Activated T-helper 1 cell treated with anti-CD3 and anti-CD28 coated beads, Interleukin-12 subunit alpha, Interleukin-12 subunit beta, Interleukin-2, Interleukin-4 antibody, amounts not matched to agents 30 ng/mL and 10 ng/mL and 1 ng/mL, durations not matched to agents 14 hours and 24 hours and 36 hours (primary cell): ENCODE measurements at regions of chr1 and their contacts with region 1.

Region 1: DNA sequence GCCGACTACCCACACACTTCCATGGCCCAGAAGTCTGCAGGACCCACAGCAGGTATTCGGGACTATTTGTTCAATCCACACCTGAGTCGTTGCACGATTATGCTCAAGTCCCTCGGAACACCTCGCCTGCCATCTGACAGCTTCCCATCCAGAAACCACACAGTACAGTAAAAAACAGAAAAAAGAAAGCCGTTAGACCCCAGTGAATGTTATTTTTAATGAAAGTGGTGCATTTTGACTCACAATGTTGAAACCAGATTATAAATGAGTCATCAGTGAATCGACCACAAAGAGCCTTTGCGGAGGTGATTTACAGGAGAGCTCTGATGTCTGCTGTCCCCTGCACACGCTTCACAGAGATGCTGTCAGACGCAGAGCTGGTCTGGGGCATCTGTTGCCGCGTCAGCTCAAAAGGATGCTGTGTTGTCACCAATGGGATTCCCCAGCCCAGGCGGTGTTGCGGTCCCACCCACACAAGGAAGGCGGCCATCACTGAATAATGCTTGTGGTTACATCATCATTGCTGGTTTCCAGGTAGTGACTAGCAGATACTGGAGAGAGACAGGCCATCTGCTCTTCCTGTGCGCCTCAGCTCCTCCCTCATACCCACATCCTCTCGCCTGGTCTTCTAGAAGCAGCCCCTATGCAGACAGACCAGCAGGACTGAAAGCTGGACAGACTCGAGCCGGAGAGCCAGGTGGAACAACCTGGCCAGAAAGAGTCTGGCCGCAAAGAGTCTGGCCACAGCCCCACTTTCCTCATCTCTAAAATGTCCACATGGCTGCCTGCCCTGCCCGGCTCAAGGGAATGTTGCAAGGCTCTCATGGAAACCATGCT is 116.8 kb downstream of the TOMM20 start:
- DNase-seq: peak; percentile 97
- H3K4me3 Mint-ChIP-seq: peak overlapping the region; percentile 40
- H3K27ac Mint-ChIP-seq: peak overlapping the region; percentile 95
- H3K4me1 Mint-ChIP-seq: peaks cover 88% of the 10 kb centered on the region
- H3K27me3 Mint-ChIP-seq: peaks cover 5% of the 10 kb centered on the region

Region 2: DNA sequence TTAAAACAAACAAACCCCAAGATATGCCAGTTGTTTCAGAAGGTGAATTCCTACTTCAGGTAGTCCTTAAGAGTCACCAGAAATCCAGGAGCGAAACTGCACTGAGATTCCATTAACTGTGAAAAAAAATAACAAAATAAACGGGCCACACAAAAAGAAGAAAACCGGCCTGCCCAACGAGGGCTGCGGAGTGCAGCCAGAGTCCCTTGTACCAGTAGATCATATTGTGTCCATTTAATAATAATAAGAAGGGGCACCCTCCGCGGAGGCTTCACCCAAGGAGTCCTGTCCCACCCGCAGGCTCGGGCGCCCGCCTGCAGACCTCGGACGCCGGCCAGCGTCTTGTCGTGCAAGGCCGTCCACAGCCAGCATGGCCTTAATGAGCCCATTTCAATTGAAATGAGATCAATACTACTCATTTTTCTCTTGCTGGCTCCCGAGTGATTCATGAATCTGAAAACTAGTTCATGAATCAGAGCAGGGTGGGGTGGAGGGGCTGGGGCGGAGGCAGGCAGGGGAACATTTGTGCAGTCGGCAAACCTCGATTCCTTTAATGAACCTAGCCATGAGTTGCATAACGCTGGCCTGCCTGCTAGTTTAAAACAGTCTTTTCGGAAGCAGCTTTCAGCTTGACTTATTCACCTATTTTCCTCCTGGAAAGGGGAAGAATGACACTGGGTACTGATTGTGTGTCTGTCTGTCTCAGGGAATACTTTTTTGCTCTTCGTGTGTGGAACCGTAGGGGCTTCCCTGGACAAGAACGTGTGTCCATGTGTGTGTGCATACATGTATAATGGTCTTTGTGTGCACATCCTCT is 288.7 kb before region 1 on chr1:
- intact Hi-C with region 1: loop called (anchors 1 kb)
- DNase-seq: peak; percentile 7
- H3K4me3 Mint-ChIP-seq: peak overlapping the region; percentile 70
- H3K27ac Mint-ChIP-seq: peak overlapping the region; percentile 97
- H3K4me1 Mint-ChIP-seq: peaks cover 79% of the 10 kb centered on the region
- H3K27me3 Mint-ChIP-seq: peaks cover 5% of the 10 kb centered on the region

Region 3: DNA sequence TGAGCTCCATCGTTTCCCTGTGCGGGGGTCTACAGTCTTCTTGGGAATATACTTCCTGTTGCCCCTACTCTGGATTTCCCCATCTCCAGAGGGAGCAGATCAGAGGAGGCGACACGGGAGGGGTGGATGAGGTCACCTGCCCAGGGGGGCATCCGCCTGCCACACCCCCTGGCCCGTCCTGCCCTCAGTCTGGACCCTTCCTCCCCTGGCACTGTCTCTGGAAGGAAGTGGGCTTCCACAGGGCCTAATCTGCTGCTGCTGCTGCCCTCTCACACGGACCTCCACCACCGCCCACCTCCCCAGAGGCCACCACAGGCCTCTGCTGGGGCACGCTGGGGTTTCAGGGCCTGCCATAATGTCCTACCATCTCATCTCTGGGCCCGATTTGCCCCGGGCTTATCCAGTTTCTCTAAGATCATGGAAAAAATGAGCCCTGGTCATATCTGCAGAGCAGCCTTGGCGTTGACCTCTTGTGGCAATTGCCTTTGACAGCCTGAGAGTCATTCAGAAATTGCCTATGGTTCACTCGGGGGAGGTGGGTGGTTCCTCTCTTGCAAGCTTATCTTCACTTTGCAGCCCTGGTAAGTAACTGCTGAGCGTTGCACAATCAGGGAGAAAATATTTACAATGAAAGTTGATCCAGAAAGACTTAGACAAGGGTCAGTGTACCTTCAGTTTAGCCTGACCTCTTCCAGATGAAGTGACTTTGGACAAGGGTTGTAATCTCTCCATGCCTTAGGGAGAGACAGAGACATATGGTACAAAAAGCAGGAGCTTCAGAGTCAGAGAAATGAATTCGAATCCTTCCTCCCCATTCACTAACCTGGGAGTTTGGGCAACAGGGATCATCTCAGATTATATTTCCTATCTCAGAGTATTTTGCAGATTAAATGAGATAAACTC is 135.6 kb before region 1 on chr1:
- intact Hi-C with region 1: loop called (anchors 1 kb)
- DNase-seq: no peak
- H3K4me3 Mint-ChIP-seq: peak overlapping the region; percentile 11
- H3K27ac Mint-ChIP-seq: peak overlapping the region; percentile 88
- H3K4me1 Mint-ChIP-seq: peaks cover 55% of the 10 kb centered on the region
- H3K27me3 Mint-ChIP-seq: no peaks in the 10 kb centered on the region

Region 4: GRCh38 chr1:234978397-234979295 is 33.2 kb before region 1 on chr1:
- intact Hi-C with region 1: loop called (anchors 1 kb)
- DNase-seq: no peak
- H3K4me3 Mint-ChIP-seq: peak overlapping the region; percentile 83
- H3K27ac Mint-ChIP-seq: peak overlapping the region; percentile 92
- H3K4me1 Mint-ChIP-seq: peaks cover 88% of the 10 kb centered on the region
- H3K27me3 Mint-ChIP-seq: no peaks in the 10 kb centered on the region

Region 5: GRCh38 chr1:235050911-235051360 is 39.1 kb after region 1 on chr1:
- intact Hi-C with region 1: loop called (anchors 1 kb)
- DNase-seq: no peak
- H3K4me3 Mint-ChIP-seq: no peak overlapping the region
- H3K27ac Mint-ChIP-seq: peak overlapping the region; percentile 78
- H3K4me1 Mint-ChIP-seq: peaks cover 49% of the 10 kb centered on the region
- H3K27me3 Mint-ChIP-seq: no peaks in the 10 kb centered on the region